Endothelial cell of umbilical vein (primary cell): ENCODE measurements at regions of chr6 and their contacts with region 1.

Region 1: GRCh38 chr6:137799950-137800568 is 67.0 kb upstream of the TNFAIP3 start:
- DNase-seq: peak; percentile 68
- H3K4me3 ChIP-seq: no peak overlapping the region
- H3K27ac ChIP-seq: no peak overlapping the region
- H3K4me1 ChIP-seq: no peaks in the 10 kb centered on the region
- H3K27me3 ChIP-seq: no peaks in the 10 kb centered on the region
- CTCF ChIP-seq: peak; percentile 53 to 66
- POLR2A ChIP-seq: no peak

Region 2: DNA sequence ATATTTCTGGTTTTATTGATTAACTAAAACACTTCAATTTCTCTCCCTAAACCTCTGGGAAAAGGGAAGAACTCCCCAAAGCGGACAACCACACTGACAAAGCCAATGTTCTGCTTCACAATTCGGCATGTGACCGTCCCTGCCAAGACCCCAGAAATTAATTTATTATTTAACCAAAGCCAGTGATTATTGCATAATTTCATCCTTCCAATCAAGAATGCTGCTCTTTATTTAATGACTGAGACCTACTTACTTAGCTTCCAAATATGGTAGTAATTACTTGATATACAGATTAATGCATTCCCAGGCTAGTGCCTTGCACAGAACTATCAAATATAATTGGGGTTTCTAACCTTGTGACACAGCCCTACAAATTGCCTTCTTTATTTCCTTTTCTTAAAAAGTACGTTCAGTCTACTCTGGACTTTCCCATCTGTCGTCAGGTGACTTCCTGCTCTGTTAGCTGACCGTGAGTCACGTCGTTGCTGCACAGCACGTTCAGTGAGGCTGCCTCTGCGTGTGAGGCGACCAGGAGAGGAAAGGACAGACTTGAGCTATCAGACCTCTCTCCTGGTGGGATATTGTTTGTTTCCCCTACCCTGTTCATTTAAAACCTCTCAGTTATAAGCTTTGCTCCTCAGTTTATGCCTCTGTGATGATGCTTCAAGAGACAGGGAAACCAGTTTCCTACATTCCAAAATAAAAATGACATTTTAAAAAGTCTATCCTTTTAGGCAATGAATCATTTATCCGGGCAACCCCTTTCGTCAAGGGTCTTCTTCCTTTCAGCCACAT is 11.3 kb after region 1 on chr6:
- CTCF ChIA-PET with region 1: interaction called, 17 read pairs
- POLR2A ChIA-PET with region 1: no interaction called
- dilution Hi-C with region 1: no loop called
- intact Hi-C with region 1: no loop called
- DNase-seq: peak; percentile 89
- H3K4me3 ChIP-seq: no peak overlapping the region
- H3K27ac ChIP-seq: peak overlapping the region; percentile 0
- H3K4me1 ChIP-seq: peaks cover 19% of the 10 kb centered on the region
- H3K27me3 ChIP-seq: no peaks in the 10 kb centered on the region
- CTCF ChIP-seq: no peak
- POLR2A ChIP-seq: no peak

Region 3: DNA sequence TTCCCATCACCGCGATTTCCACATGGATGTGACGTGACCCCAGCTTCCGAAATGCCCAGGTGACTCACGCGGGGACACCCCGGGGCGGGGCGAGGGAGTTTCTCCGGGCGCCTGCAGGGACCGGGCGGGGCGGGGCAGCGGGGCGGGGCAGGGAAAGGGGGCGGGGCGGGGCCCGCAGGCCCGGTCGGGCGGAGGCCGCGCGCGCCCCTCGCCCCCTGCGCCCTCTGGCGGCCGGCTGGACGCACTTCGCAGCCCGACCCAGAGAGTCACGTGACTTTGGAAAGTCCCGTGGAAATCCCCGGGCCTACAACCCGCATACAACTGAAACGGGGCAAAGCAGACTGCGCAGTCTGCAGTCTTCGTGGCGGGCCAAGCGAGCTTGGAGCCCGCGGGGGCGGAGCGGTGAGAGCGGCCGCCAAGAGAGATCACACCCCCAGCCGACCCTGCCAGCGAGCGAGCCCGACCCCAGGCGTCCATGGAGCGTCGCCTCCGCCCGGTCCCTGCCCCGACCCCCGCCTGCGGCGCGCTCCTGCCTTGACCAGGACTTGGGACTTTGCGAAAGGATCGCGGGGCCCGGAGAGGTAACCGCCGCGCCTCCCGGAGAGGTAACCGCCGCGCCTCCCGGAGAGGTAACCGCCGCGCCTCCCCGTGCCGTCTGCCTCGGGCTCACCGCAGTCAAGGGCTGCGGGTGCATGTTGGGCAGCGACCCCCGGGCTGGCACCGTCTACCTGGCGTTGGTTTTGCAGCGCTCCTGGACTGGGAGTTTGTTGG is 67.0 kb after region 1 on chr6 and contains the start of gene TNFAIP3:
- CTCF ChIA-PET with region 1: interaction called, 30 read pairs
- POLR2A ChIA-PET with region 1: no interaction called
- dilution Hi-C with region 1: no loop called
- intact Hi-C with region 1: loop called (anchors 1 kb)
- DNase-seq: peak; percentile 96
- H3K4me3 ChIP-seq: peak within 1 kb of the TSS; percentile 54 to 88 (median 63)
- H3K27ac ChIP-seq: peak within 1 kb of the TSS; percentile 65
- H3K4me1 ChIP-seq: peaks cover 24% of the 10 kb centered on the region
- H3K27me3 ChIP-seq: no peaks in the 10 kb centered on the region
- CTCF ChIP-seq: peak; percentile 70 to 81
- POLR2A ChIP-seq: peak; percentile 45
- total RNA-seq, gene TNFAIP3: 4.2 and 8.6 TPM in 2 replicates

Region 4: GRCh38 chr6:137938770-137939379 is 138.8 kb after region 1 on chr6:
- CTCF ChIA-PET with region 1: interaction called, 50 read pairs
- POLR2A ChIA-PET with region 1: no interaction called
- dilution Hi-C with region 1: no loop called
- intact Hi-C with region 1: loop called (anchors 1 kb)
- DNase-seq: no peak
- H3K4me3 ChIP-seq: no peak overlapping the region
- H3K27ac ChIP-seq: no peak overlapping the region
- H3K4me1 ChIP-seq: no peaks in the 10 kb centered on the region
- H3K27me3 ChIP-seq: no peaks in the 10 kb centered on the region
- CTCF ChIP-seq: no peak
- POLR2A ChIP-seq: no peak

Region 5: DNA sequence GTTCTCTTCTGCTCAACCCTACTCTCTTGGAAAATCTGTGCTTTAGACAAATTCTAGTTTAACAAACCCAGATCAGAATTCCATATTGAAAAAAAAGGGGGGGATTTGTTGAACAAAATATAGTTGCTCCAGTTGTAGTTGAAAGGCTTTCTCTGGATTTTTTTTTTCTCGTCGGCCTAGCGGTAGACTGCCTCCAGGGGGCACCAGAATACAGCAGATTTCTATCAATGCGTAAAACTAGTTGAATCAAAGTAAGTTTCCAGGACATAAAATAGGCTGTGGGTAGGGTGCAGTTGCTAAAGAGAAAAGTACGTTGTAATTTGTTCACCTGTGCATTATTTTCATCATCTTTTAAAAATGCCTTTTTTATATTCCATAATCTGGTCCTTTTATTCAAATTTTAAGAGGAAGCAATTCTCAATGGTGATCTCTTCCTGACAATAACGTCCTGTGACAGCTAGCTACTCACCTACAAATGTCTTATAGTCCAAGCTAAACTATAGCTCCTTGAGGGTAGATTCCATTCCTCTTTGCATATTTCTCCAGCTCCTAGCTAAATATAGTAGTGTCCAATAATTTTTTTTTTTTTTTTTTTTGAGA is 201.8 kb after region 1 on chr6:
- CTCF ChIA-PET with region 1: interaction called, 13 read pairs
- POLR2A ChIA-PET with region 1: no interaction called
- dilution Hi-C with region 1: no loop called
- intact Hi-C with region 1: loop called (anchors 5 kb)
- DNase-seq: peak; percentile 62
- H3K4me3 ChIP-seq: no peak overlapping the region
- H3K27ac ChIP-seq: no peak overlapping the region
- H3K4me1 ChIP-seq: no peaks in the 10 kb centered on the region
- H3K27me3 ChIP-seq: no peaks in the 10 kb centered on the region
- CTCF ChIP-seq: peak; percentile 69 to 82
- POLR2A ChIP-seq: no peak